CD8-positive, alpha-beta memory T cell (primary cell): ENCODE measurements at regions of chr6 and their contacts with region 1.

Region 1: DNA sequence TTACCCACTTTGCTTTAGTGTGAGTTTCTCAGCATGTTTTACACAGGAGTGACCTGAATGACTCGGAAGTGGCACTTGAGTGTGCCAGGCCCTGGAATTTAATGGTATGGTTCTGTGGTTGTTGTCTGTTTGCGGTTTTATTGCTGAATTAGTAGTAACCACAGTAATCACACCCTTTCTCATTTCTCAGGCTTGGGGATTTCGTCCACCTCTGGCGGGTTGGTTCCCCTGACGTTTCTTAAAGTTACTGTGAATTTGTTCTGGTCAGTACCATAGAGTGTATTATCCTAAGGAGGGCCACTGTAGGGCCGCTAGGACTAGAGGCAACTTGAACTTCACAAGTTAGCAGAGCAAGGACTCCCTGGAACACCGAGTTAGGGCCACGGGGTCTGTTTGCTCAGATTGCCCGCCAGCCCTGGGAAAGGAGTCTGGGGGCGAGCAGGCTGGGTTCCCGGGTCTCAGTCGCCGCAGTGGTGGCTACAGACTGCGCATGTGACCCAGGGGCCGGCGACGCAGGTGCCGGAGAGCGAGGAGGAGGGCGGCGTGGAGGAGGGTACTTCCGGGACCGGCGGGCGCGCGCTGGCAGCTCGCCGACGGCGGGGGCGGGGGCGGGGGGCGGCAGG is 546 bp upstream of the KLHL32 start:
- DNase-seq: peak in 1 of 5 donors; percentile 68
- H3K4me3 ChIP-seq: peak overlapping the region; percentile 66
- H3K4me3 Mint-ChIP-seq: peak overlapping the region; percentile 90 to 99 (median 97)
- H3K27ac ChIP-seq: peak overlapping the region; percentile 85
- H3K27ac Mint-ChIP-seq: peak overlapping the region; percentile 96 to 99 (median 98)
- H3K4me1 ChIP-seq: peaks cover 23% of the 10 kb centered on the region
- H3K4me1 Mint-ChIP-seq: peaks cover 29 to 44% (median 34%) of the 10 kb centered on the region in 3 donors
- H3K27me3 ChIP-seq: no peaks in the 10 kb centered on the region
- H3K27me3 Mint-ChIP-seq: peaks cover 0 to 12% of the 10 kb centered on the region in 2 donors

Region 2: GRCh38 chr6:96897383-96898240 is 26.4 kb before region 1 on chr6 and contains the start of gene NDUFAF4:
- CTCF ChIA-PET with region 1: interaction called, 12 read pairs
- POLR2A ChIA-PET with region 1: interaction called, 16 read pairs
- DNase-seq: peak; percentile 94 to 97 (median 95)
- H3K4me3 ChIP-seq: peak within 1 kb of the TSS; percentile 78
- H3K4me3 Mint-ChIP-seq: peak within 1 kb of the TSS; percentile 93 to 98 (median 97)
- H3K27ac ChIP-seq: peak within 1 kb of the TSS; percentile 92
- H3K27ac Mint-ChIP-seq: peak within 1 kb of the TSS; percentile 87 to 99 (median 96)
- H3K4me1 ChIP-seq: peaks cover 32% of the 10 kb centered on the region
- H3K4me1 Mint-ChIP-seq: peaks cover 26 to 46% (median 40%) of the 10 kb centered on the region in 3 donors
- H3K27me3 ChIP-seq: no peaks in the 10 kb centered on the region
- H3K27me3 Mint-ChIP-seq: peaks cover 2 to 7% of the 10 kb centered on the region in 2 donors
- total RNA-seq, gene NDUFAF4: 69.3 to 76.5 TPM

Region 3: GRCh38 chr6:96907498-96907897 is 16.5 kb before region 1 on chr6:
- CTCF ChIA-PET with region 1: interaction called, 11 read pairs
- POLR2A ChIA-PET with region 1: no interaction called
- DNase-seq: no peak
- H3K4me3 ChIP-seq: no peak overlapping the region
- H3K4me3 Mint-ChIP-seq: no peak overlapping the region
- H3K27ac ChIP-seq: no peak overlapping the region
- H3K27ac Mint-ChIP-seq: no peak overlapping the region
- H3K4me1 ChIP-seq: no peaks in the 10 kb centered on the region
- H3K4me1 Mint-ChIP-seq: no peaks in the 10 kb centered on the region
- H3K27me3 ChIP-seq: no peaks in the 10 kb centered on the region
- H3K27me3 Mint-ChIP-seq: peaks cover 7 to 31% of the 10 kb centered on the region in 2 donors